ENCODE measurements at regions of chr19 and their contacts with region 1.

Region 1: DNA sequence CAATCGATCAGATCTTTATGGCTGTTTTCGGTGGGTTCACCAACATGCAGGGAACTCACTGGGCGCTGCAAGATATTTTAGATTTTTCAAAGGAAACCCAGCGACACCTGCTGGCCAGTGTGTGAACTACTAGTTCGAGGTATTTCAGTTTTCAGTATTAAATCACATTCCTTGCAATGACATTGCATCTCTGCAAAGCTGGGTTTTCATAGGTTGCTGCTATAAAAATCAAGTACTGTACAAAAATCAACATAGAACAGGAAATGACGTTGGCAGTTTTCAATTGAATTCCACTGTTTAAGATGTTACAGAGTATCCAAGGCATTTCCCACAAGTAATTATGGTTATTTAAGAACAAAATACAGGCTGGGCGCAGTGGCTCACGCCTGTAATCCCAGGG is 17.6 kb downstream of the LIG1 start:
- DNase-seq: peak; percentile 49 to 64
- H3K4me3 ChIP-seq: no peak overlapping the region
- H3K4me3 Mint-ChIP-seq: no peak overlapping the region
- H3K27ac Mint-ChIP-seq: no peak overlapping the region
- H3K4me1 ChIP-seq: no peaks in the 10 kb centered on the region
- H3K4me1 Mint-ChIP-seq: no peaks in the 10 kb centered on the region
- H3K27me3 ChIP-seq: no peaks in the 10 kb centered on the region
- H3K27me3 Mint-ChIP-seq: no peaks in the 10 kb centered on the region
- CTCF ChIP-seq: peak; percentile 70 to 91

Region 2: DNA sequence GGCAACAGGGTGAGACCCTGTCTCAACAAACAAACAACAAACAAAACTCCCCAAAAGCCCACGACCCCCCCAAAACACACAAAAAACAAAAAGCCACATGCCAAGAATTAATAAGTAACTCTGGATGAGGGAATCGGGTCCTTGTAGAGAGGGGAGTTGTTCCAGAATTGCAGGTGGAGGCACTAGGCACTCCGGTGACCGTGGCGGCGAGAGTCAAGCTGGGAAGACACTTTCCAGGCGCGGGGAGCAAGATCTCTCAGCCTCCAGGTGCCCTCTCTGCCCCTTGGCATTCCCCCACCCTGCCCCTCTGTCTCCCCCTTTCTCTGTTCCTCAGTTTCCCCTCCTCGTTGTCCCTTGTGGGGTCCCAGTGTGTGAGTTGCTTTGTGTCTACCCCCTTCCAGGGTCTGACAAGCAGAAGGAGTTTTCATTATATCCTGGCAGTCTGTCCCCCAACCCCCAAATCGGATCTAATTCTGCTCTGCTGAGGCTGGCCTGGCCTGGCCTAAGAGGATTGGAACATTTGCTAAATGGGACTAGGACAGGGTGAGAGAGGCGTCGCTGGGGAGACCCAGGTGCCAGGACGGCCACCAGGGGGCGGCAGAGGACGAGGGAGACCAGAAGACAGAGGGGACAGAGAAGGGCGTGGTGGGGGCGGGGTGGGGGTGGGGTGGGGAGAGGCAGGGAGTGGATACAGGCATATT is 339.1 kb before region 1 on chr19:
- CTCF ChIA-PET with region 1: no interaction called
- POLR2A ChIA-PET with region 1: no interaction called
- intact Hi-C with region 1: no loop called
- DNase-seq: peak; percentile 85 to 92
- H3K4me3 ChIP-seq: no peak overlapping the region
- H3K4me3 Mint-ChIP-seq: no peak overlapping the region
- H3K27ac Mint-ChIP-seq: no peak overlapping the region
- H3K4me1 ChIP-seq: no peaks in the 10 kb centered on the region
- H3K4me1 Mint-ChIP-seq: no peaks in the 10 kb centered on the region
- H3K27me3 ChIP-seq: no peaks in the 10 kb centered on the region
- H3K27me3 Mint-ChIP-seq: no peaks in the 10 kb centered on the region
- CTCF ChIP-seq: peak; percentile 81 to 86

Region 3: GRCh38 chr19:48110350-48110966 is 42.1 kb before region 1 on chr19 and contains the start of gene PLA2G4C:
- CTCF ChIA-PET with region 1: interaction called, 5 read pairs
- POLR2A ChIA-PET with region 1: no interaction called
- intact Hi-C with region 1: loop called (anchors 1 kb)
- DNase-seq: peak; percentile 91 to 93
- H3K4me3 ChIP-seq: peak within 1 kb of the TSS; percentile 31
- H3K4me3 Mint-ChIP-seq: peak within 1 kb of the TSS; percentile 73
- H3K27ac Mint-ChIP-seq: no peak within 1 kb of the TSS
- H3K4me1 ChIP-seq: peaks cover 7% of the 10 kb centered on the region
- H3K4me1 Mint-ChIP-seq: peaks cover 8% of the 10 kb centered on the region
- H3K27me3 ChIP-seq: no peaks in the 10 kb centered on the region
- H3K27me3 Mint-ChIP-seq: no peaks in the 10 kb centered on the region
- CTCF ChIP-seq: no peak
- total RNA-seq, gene PLA2G4C: 1.5 and 2.4 TPM in 2 replicates

Region 4: DNA sequence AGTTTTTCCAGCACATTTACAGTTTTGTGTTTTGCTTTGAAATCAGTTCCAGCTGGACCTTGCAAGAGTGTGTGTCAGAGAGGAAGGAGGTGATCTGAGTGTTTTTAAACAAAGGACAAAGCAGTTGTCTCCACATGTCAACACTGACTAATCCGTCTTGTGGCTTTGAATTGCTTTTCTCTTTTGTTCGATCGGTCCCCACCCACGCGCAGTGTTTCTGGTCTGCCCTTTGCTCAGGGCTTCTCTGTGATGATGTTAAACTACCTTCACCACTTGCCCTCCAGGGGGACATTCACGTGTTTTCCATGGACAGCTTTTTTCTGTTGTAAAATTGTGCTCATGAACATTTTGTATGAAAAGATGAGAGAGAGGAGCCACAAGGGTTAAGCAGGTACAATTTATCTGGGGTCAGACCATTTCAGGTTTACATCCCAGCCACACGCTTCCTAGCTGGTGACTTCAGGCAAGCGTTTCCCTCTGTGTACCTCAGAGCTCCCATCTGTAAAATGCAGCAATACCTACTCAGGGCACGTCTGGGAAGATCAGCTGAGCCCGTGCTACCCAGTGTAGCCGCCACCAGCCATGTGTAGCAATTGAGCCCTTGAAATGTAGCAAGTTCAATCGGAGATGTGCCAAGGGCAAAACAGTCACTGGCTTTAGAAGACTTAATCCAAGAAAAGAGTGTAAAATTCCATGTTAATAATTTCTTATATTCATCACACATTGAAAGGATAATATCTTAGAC is 28.5 kb before region 1 on chr19:
- CTCF ChIA-PET with region 1: interaction called, 3 read pairs
- POLR2A ChIA-PET with region 1: no interaction called
- intact Hi-C with region 1: loop called (anchors 1 kb)
- DNase-seq: peak; percentile 64 to 78
- H3K4me3 ChIP-seq: no peak overlapping the region
- H3K4me3 Mint-ChIP-seq: peak overlapping the region; percentile 21
- H3K27ac Mint-ChIP-seq: peak overlapping the region; percentile 58
- H3K4me1 ChIP-seq: peaks cover 16% of the 10 kb centered on the region
- H3K4me1 Mint-ChIP-seq: peaks cover 12% of the 10 kb centered on the region
- H3K27me3 ChIP-seq: no peaks in the 10 kb centered on the region
- H3K27me3 Mint-ChIP-seq: no peaks in the 10 kb centered on the region
- CTCF ChIP-seq: peak; percentile 15 to 36

Region 5: DNA sequence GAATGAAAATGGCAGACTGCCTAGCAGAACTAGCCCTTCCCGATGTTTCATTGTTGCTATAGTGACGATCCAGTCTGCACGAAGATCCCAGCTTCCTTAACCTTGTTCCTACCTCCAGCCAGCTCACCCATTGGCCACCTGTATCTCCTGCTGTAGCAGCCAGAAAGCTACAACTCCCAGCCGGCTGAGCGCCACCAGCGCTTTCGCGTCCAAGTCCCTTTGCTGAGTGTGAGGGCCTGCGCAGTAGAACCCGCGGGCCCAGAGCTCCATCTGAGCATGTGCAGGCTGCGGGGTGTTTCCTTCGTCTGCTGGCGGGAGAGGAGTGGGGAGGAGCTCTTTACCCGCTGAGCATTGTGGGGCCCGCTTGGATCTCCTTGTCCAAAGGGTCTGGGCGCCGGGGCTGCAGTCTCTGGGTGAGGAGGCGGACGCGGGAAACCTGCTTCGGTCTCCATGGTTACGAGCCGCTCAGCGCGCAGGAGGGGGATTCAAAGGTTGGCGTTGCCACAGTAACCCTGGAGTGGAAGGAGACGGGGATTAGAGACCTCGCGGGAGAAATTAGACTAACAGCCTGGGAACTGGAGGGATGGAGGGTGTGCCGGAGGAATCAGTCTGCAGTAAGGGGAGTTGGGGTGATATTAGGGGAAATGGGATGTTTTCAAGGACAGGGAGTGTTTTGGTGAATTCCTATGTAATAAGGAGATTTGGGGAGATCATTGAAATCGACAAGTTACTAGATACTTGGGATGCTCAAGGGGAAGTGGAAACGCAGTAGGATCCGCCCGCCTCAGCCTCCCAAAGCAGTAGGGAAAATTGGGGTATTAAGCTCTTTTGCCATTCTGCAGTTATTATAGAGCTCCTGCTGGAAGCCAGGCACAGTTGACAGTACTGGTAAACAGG is 51.4 kb after region 1 on chr19:
- CTCF ChIA-PET with region 1: no interaction called
- POLR2A ChIA-PET with region 1: no interaction called
- intact Hi-C with region 1: no loop called
- DNase-seq: peak; percentile 97 to 98
- H3K4me3 ChIP-seq: peak overlapping the region; percentile 67
- H3K4me3 Mint-ChIP-seq: no peak overlapping the region
- H3K27ac Mint-ChIP-seq: no peak overlapping the region
- H3K4me1 ChIP-seq: no peaks in the 10 kb centered on the region
- H3K4me1 Mint-ChIP-seq: no peaks in the 10 kb centered on the region
- H3K27me3 ChIP-seq: no peaks in the 10 kb centered on the region
- H3K27me3 Mint-ChIP-seq: no peaks in the 10 kb centered on the region
- CTCF ChIP-seq: no peak

Region 6: DNA sequence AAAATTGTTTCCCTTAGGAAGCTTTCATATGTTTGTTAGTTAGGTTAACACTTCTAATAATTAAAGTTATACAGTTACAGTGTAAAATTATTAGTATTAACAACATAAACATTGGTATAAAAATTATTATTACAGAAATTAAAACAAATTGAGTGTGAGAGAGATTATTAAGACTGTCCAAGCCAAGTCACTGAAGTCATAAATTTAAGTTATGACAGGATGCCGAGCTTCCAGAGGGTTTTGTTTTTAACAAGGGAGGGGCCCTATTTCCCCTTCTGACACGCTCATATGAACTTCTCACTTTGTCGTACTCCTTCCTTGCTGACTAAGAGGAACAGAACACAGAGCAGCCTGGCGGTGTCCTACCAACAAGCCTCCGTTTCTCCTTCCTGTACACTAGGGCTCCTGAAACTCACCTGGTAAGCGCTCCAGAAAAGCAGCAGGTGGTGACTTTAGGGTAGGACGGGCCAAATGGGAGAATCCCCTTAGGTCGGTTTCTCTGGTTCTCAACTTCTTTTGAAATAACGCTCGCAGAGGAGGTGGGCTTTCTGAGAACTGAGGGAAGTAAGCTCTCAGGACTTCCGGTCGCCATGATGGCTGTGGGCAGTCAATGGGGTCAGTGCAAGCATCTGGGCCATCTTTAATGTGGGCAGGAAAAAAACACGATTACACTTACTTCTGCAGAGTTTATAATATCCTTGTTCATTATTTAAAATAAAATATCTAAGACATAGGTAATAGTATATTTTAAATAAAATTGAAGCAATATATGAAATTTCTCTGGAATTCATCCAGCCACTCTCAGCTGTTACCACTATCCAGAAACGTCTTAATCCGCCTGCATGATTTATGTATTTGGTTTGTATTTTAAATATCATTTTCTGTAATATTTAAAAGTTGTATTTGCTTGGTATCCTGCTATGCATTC is 103.1 kb after region 1 on chr19 and contains the start of gene CARD8:
- CTCF ChIA-PET with region 1: no interaction called
- POLR2A ChIA-PET with region 1: no interaction called
- intact Hi-C with region 1: no loop called
- DNase-seq: peak; percentile 84 to 88
- H3K4me3 ChIP-seq: peak within 1 kb of the TSS; percentile 63
- H3K4me3 Mint-ChIP-seq: peak within 1 kb of the TSS; percentile 95
- H3K27ac Mint-ChIP-seq: peak within 1 kb of the TSS; percentile 96
- H3K4me1 ChIP-seq: peaks cover 7% of the 10 kb centered on the region; the same call in 1 of the 2 replicates
- H3K4me1 Mint-ChIP-seq: peaks cover 6% of the 10 kb centered on the region
- H3K27me3 ChIP-seq: no peaks in the 10 kb centered on the region
- H3K27me3 Mint-ChIP-seq: no peaks in the 10 kb centered on the region
- CTCF ChIP-seq: no peak
- total RNA-seq, gene CARD8: 17.7 and 19.9 TPM in 2 replicates

Measured in Caco-2 (cell line).